MCF 10A (cell line): ENCODE measurements at regions of chr4 and their contacts with region 1.

Region 1: GRCh38 chr4:170259631-170260153 is 169.9 kb upstream of the AADAT start:
- DNase-seq: peak; percentile 98
- H3K4me3 Mint-ChIP-seq: no peak overlapping the region
- H3K27ac Mint-ChIP-seq: no peak overlapping the region
- H3K4me1 Mint-ChIP-seq: no peaks in the 10 kb centered on the region
- H3K27me3 Mint-ChIP-seq: no peaks in the 10 kb centered on the region
- CTCF ChIP-seq: peak; percentile 95

Region 2: DNA sequence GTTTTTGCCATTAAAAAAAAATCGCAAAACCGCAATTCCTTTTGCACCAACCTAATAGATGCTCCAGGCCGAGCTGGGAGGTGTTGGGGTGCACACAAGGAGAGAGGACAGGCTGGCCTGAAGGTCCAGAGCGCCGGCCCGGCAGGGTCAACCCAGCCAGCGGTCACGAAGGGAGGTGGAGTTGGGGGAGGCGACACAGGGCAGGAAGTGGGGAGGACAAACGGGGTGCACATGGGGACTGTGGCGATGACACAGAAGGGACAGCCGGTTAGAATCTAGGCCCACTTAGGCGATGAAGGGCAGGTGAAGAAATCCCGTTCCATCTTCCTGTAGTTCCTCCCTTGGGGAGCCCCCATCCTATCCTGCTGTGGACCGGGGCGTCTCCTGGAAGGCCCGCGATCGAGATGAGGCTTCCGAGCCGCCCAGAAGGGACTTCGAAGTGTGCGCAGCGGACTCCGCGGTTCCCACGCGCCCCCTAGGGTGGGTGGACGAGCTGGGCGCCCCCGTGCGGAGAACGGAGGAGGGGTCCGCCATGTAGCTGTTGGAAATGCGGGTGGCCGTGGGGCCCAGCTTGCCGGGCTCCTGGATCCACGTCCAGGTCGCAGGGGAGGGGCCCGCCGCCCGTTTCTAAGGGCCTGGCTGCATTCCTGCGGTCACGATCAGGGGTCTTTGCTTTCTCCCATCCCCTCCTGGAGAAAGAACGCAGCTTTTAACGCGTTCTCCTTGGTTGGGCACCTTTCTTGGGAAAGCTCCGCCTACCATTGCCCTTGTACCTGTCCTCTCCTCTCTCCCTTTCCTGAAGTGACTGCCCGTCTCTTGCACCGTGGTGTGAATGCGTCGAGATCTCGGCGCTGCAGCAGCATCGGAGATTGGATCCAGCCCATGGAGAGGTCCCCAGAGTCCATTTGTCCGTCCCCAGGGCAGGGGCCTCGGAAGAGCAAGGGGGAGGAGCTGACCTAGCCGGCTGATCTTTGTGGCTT is 484.9 kb before region 1 on chr4:
- CTCF ChIA-PET with region 1: no interaction called
- POLR2A ChIA-PET with region 1: no interaction called
- intact Hi-C with region 1: no loop called
- DNase-seq: no peak
- H3K4me3 Mint-ChIP-seq: no peak overlapping the region
- H3K27ac Mint-ChIP-seq: no peak overlapping the region
- H3K4me1 Mint-ChIP-seq: no peaks in the 10 kb centered on the region
- H3K27me3 Mint-ChIP-seq: no peaks in the 10 kb centered on the region
- CTCF ChIP-seq: no peak

Region 3: DNA sequence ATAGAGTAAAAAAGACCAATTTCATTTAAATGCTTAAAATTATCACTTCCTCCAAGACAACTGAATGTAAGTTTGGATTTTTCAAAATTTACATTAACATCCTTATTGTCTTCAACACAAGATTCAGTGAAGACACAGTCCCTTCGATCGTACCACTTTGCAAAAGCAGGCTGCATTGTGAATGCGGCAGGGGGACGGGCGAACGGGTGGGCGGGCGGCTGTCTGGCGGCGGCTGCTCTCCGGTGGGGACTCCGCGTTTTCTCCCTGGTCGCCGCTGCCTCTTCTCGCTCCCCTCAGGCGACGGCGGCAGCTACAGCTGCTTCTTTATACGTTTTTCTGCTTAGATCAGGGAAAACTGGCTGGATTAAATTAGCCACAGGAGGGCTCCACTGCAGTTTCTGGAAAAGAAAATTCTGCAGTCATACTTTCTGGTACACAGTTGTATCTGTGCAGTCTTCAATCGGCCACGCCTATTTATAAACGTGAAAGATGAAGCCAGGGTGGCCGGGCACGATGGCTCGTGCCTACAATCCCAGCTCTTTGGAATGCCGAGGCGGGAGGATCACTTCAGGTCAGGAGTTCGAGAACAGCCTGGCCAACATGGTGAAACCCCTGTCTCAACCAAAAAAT is 468.1 kb before region 1 on chr4:
- CTCF ChIA-PET with region 1: no interaction called
- POLR2A ChIA-PET with region 1: no interaction called
- intact Hi-C with region 1: no loop called
- DNase-seq: peak; percentile 65
- H3K4me3 Mint-ChIP-seq: peak overlapping the region; percentile 1
- H3K27ac Mint-ChIP-seq: peak overlapping the region; percentile 10
- H3K4me1 Mint-ChIP-seq: peaks cover 27% of the 10 kb centered on the region
- H3K27me3 Mint-ChIP-seq: peaks cover 31% of the 10 kb centered on the region
- CTCF ChIP-seq: peak; percentile 41

Region 4: DNA sequence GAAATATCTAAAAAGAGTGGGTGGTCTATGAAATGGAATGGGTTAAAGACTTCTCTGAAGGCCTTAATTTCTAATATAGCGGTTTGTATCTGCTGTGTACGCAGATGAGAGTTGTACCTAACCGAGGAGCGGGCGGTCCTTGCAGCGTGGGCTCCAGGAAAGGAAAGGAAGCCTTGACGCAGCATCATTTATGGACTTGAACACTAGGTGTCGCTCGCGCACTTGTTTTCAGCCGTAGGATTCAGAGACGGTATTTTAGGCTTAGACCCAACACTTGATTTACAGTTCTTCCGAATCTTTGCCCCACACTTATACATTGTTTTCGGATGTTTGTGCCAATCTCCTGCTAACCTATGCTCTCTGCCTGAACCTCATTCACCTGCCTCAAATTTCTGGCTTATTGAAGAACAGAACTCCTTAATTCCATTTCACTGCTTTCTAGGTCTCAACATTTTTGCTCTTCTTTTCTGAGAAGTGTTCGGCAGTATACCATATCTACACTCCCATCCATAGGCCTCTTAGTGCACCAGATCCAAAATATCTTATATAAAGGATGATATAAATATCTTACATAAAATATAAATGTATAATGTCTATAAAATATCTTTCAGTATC is 121.0 kb before region 1 on chr4:
- CTCF ChIA-PET with region 1: interaction called, 48 read pairs
- POLR2A ChIA-PET with region 1: no interaction called
- intact Hi-C with region 1: loop called (anchors 1 kb)
- DNase-seq: peak; percentile 82
- H3K4me3 Mint-ChIP-seq: no peak overlapping the region
- H3K27ac Mint-ChIP-seq: no peak overlapping the region
- H3K4me1 Mint-ChIP-seq: peaks cover 5% of the 10 kb centered on the region
- H3K27me3 Mint-ChIP-seq: no peaks in the 10 kb centered on the region
- CTCF ChIP-seq: peak; percentile 87

Region 5: DNA sequence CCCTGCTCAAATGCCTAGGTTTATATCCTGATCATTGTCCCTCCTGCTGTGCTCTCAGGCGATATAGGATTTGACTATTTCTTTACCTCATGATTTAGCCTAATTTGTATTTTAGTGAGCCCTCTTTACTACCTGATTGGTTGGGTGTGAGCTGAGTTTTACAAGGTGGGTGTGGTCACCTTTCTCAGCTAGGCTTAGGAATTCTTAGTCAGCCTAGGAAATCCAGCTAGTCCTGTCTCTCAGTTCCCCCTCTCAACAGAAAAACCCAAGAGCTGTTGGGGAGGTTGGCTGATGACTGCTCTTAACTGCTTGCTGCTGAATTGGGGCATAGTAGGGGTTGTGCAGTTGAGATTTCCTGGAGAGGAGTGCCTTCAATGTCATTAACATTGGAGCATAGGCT is 69.4 kb before region 1 on chr4:
- CTCF ChIA-PET with region 1: interaction called, 29 read pairs
- POLR2A ChIA-PET with region 1: no interaction called
- intact Hi-C with region 1: no loop called
- DNase-seq: no peak
- H3K4me3 Mint-ChIP-seq: no peak overlapping the region
- H3K27ac Mint-ChIP-seq: no peak overlapping the region
- H3K4me1 Mint-ChIP-seq: peaks cover under 1% of the 10 kb centered on the region
- H3K27me3 Mint-ChIP-seq: no peaks in the 10 kb centered on the region
- CTCF ChIP-seq: no peak

Region 6: DNA sequence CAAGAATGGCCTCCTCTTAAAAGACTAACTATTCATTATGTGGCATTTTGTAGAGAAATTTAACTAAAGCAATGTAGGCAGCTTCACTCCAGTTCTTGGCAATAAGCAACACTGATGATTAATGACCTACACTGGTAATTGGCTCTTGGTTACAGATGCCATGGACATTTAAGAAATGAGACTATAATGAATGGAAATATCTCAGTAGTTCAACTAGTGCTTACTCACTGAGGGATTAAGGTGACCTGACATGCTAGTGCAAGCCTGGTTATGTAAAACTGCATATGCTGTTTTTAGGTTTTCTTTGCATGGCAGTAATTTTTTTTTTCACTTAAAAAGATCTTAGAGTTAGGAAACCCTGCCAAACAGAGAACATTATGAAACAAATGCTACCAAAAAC is 17.2 kb before region 1 on chr4:
- CTCF ChIA-PET with region 1: interaction called, 97 read pairs
- POLR2A ChIA-PET with region 1: no interaction called
- intact Hi-C with region 1: no loop called
- DNase-seq: peak; percentile 36
- H3K4me3 Mint-ChIP-seq: no peak overlapping the region
- H3K27ac Mint-ChIP-seq: no peak overlapping the region
- H3K4me1 Mint-ChIP-seq: peaks cover 11% of the 10 kb centered on the region
- H3K27me3 Mint-ChIP-seq: no peaks in the 10 kb centered on the region
- CTCF ChIP-seq: no peak

Region 7: DNA sequence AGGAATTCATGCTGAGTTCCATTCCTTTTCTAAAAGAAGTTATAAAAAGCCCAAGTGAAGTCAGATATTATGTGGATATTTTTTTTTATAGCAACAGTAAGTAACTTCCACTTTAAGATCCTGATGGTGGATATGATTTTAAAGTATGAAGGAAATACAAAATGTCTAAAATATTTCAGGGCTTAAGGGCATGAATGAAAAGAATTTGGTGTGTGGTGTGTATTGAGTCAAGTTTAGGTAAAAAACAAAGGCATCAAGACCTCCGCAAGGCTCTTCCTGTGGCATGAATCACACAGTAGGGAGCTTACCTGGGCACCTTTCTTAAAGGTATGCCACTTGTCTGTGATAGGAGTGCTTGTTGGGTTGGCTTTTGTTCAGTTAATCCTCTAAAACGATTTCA is 92.5 kb after region 1 on chr4:
- CTCF ChIA-PET with region 1: no interaction called
- POLR2A ChIA-PET with region 1: no interaction called
- intact Hi-C with region 1: no loop called
- DNase-seq: no peak
- H3K4me3 Mint-ChIP-seq: no peak overlapping the region
- H3K27ac Mint-ChIP-seq: no peak overlapping the region
- H3K4me1 Mint-ChIP-seq: no peaks in the 10 kb centered on the region
- H3K27me3 Mint-ChIP-seq: no peaks in the 10 kb centered on the region
- CTCF ChIP-seq: no peak

Region 8: GRCh38 chr4:170497112-170497511 is 237.4 kb after region 1 on chr4:
- CTCF ChIA-PET with region 1: interaction called, 17 read pairs
- POLR2A ChIA-PET with region 1: no interaction called
- intact Hi-C with region 1: loop called (anchors 2 kb)
- DNase-seq: peak; percentile 45
- H3K4me3 Mint-ChIP-seq: peak overlapping the region; percentile 81
- H3K27ac Mint-ChIP-seq: peak overlapping the region; percentile 42
- H3K4me1 Mint-ChIP-seq: no peaks in the 10 kb centered on the region
- H3K27me3 Mint-ChIP-seq: no peaks in the 10 kb centered on the region
- CTCF ChIP-seq: no peak

Region 9: GRCh38 chr4:171186700-171187099 is 927.0 kb after region 1 on chr4:
- CTCF ChIA-PET with region 1: no interaction called
- POLR2A ChIA-PET with region 1: no interaction called
- intact Hi-C with region 1: loop called (anchors 2 kb)
- DNase-seq: peak; percentile 21
- H3K4me3 Mint-ChIP-seq: no peak overlapping the region
- H3K27ac Mint-ChIP-seq: no peak overlapping the region
- H3K4me1 Mint-ChIP-seq: no peaks in the 10 kb centered on the region
- H3K27me3 Mint-ChIP-seq: no peaks in the 10 kb centered on the region
- CTCF ChIP-seq: no peak